GM12878 (cell line): ENCODE measurements at regions of chr11 and their contacts with region 1.

Region 1: DNA sequence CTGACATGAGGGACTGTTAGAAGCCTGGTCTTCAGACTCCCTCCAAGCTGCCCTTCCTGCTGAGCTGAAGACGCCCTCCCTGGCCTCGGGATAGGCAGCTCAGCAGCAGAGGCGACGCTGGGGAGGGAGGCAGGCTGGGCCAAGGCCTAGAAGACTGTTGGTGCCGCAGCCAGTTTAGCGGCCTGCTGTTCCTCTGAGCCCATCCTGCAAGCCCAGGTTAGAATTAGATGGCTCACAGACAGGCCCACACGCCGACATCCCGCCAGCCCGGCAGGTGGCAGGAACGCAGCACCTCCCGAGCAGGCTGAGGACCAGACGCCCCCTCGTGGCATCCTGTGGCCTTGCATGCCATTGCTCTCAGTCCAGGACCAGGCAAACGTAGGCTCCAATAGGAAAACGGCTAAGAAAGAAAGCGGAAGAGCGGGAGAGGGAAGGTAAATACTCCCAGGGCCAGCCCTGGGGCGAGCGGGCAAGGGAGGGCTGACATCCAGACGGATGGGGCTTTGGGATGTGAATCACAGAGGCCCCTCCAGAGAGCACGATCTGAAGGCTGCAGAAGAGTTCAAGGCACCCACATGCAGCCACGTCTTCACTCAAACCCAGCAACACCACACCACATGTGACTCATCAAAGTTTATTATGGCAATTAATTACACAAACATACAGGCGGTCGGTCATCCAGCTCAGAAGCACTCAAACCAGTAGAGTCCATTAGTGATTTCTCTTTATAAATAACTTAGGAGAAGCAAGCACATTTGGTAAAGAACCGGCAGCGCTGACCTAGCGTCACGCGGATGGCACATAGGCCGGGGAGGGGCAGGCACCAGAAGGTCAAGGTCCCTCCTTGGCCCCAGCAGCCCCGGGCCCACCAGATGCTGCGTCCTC is 27.6 kb downstream of the CD5 start:
- DNase-seq: peak; percentile 44
- ATAC-seq: peak; percentile 97
- H3K4me3 ChIP-seq: no peak overlapping the region
- H3K27ac ChIP-seq: peak overlapping the region; percentile 52; the same call in 1 of the 2 replicates
- H3K4me1 ChIP-seq: peaks cover 7% of the 10 kb centered on the region
- H3K27me3 ChIP-seq: no peaks in the 10 kb centered on the region
- CTCF ChIP-seq: peak; percentile 100
- EP300 ChIP-seq: no peak
- POLR2A ChIP-seq: no peak; the same call in 1 of the 2 replicates
- RAD21 ChIP-seq: peak; percentile 100

Region 2: DNA sequence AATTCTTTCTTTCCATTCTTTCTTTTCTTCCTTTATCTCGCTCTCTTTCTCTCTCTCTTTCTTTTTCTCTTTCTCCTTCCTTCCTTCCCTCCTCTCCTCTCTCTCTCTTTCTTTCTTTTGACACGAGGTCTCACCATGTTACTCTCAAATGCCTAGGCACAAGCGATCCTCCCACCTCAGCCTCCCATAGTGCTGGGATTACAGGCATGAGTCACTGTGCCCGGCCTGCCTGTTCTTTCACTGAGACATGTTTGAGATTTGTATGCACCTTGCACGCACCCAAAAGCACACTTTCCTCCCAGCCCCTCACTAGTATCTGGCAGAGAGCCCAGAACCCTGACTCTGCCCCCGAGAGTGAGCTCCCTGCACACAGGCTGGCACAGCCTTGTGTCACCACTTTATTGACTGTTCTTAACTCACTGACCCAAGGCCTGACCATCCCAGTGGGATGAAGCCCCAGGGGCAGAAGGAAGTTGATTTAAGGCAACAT is 101.6 kb before region 1 on chr11:
- CTCF ChIA-PET with region 1: interaction called, 4 read pairs
- POLR2A ChIA-PET with region 1: no interaction called
- RAD21 ChIA-PET with region 1: no interaction called
- SMC1A ChIA-PET with region 1: interaction called, 3 read pairs
- in situ Hi-C with region 1: no loop called
- intact Hi-C with region 1: loop called (anchors 1 kb)
- DNase-seq: peak; percentile 76
- ATAC-seq: peak; percentile 80
- H3K4me3 ChIP-seq: no peak overlapping the region
- H3K27ac ChIP-seq: peak overlapping the region; percentile 56
- H3K4me1 ChIP-seq: peaks cover 35% of the 10 kb centered on the region
- H3K27me3 ChIP-seq: no peaks in the 10 kb centered on the region
- CTCF ChIP-seq: no peak
- EP300 ChIP-seq: no peak
- POLR2A ChIP-seq: no peak
- RAD21 ChIP-seq: no peak

Region 3: DNA sequence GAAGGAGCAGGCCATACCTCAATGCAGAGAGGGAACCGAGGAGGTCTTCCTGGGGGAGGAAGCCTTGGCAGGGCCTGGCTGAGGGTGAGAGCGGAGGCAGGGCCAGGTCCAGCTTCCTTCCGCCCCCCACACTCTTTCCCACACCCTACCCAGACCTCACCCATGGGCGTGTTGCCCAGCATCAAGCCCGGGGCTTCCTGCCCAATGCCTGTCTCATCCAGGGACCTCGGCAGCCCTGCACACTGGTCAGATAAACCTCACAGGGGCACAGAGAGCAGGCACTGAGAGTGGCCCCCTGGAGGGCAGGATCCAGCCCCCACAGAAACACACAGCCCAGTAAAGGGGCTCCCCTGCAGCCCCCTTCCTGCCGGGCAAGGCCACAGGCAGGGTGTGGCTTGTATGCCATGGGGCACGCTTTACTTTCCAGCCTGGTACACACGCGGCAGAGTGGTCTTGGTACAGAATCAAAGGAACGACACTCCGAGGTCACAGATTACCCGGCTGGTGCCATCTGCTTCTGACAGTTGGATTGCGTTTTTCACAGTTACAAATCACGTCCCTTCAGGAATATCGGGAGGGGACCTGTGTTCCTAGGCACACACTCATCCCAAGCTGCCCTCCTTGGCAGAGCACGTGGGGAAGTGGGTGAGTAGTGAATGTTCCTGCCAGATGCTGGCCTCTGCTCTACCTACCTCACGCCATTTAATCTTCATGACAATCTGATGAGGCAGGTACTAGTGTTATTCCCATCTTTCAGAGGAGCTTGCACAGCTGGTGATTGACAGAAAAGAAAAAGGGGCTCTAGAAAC is 47.6 kb before region 1 on chr11:
- CTCF ChIA-PET with region 1: interaction called, 10 read pairs
- POLR2A ChIA-PET with region 1: no interaction called
- RAD21 ChIA-PET with region 1: interaction called, 4 read pairs
- SMC1A ChIA-PET with region 1: interaction called, 4 read pairs
- in situ Hi-C with region 1: no loop called
- intact Hi-C with region 1: no loop called
- DNase-seq: no peak
- ATAC-seq: no peak
- H3K4me3 ChIP-seq: no peak overlapping the region
- H3K27ac ChIP-seq: no peak overlapping the region
- H3K4me1 ChIP-seq: no peaks in the 10 kb centered on the region
- H3K27me3 ChIP-seq: no peaks in the 10 kb centered on the region
- CTCF ChIP-seq: no peak
- EP300 ChIP-seq: no peak
- POLR2A ChIP-seq: no peak
- RAD21 ChIP-seq: no peak